Activated B cell treated with CpG ODN at 0.5 μM for 24 hours (primary cell): ENCODE measurements at regions of chr16 and their contacts with region 1.

Region 1: GRCh38 chr16:2911580-2912329 is at the start of gene FLYWCH1:
- DNase-seq: peak; percentile 96
- ATAC-seq: peak; percentile 97
- H3K4me3 Mint-ChIP-seq: peak within 1 kb of the TSS; percentile 93
- H3K27ac Mint-ChIP-seq: peak within 1 kb of the TSS; percentile 82
- H3K4me1 Mint-ChIP-seq: peaks cover 27% of the 10 kb centered on the region
- H3K27me3 Mint-ChIP-seq: no peaks in the 10 kb centered on the region
- CTCF ChIP-seq: no peak
- total RNA-seq, gene FLYWCH1: 53.5 and 59.9 TPM in 2 replicates

Region 2: DNA sequence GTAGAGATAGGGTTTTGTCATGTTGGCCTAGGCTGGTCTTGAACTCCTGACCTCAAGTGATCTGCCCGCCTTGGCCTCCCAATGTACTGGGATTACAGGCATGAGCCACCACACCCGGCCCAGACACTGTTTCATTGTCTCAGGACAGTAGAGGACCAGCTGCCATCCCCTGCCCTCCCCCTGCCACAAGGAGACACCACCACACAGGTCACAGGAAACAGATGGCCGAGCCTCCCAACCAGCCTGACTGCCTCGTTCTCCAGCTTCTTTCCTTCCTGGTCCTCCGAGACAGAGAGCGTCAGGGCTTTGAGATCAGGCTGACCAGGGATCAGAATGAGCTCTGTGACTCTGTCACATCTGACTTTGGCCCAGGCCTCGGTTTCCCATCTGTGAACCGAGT is 623.0 kb before region 1 on chr16:
- CTCF ChIA-PET with region 1: no interaction called
- POLR2A ChIA-PET with region 1: no interaction called
- intact Hi-C with region 1: no loop called
- DNase-seq: no peak
- ATAC-seq: no peak
- H3K4me3 Mint-ChIP-seq: no peak overlapping the region
- H3K27ac Mint-ChIP-seq: no peak overlapping the region
- H3K4me1 Mint-ChIP-seq: no peaks in the 10 kb centered on the region
- H3K27me3 Mint-ChIP-seq: no peaks in the 10 kb centered on the region
- CTCF ChIP-seq: no peak

Region 3: GRCh38 chr16:2673066-2673999 is 238.4 kb before region 1 on chr16:
- CTCF ChIA-PET with region 1: no interaction called
- POLR2A ChIA-PET with region 1: no interaction called
- intact Hi-C with region 1: loop called (anchors 5 kb)
- DNase-seq: peak; percentile 91
- ATAC-seq: peak; percentile 94
- H3K4me3 Mint-ChIP-seq: peak overlapping the region; percentile 85
- H3K27ac Mint-ChIP-seq: peak overlapping the region; percentile 71
- H3K4me1 Mint-ChIP-seq: peaks cover 29% of the 10 kb centered on the region
- H3K27me3 Mint-ChIP-seq: no peaks in the 10 kb centered on the region
- CTCF ChIP-seq: no peak

Region 4: GRCh38 chr16:2897113-2897512 is 14.6 kb before region 1 on chr16:
- CTCF ChIA-PET with region 1: interaction called, 4 read pairs
- POLR2A ChIA-PET with region 1: interaction called, 11 read pairs
- intact Hi-C with region 1: loop called (anchors 2 kb)
- DNase-seq: peak; percentile 82
- ATAC-seq: peak; percentile 100
- H3K4me3 Mint-ChIP-seq: peak overlapping the region; percentile 55
- H3K27ac Mint-ChIP-seq: peak overlapping the region; percentile 69
- H3K4me1 Mint-ChIP-seq: peaks cover 17% of the 10 kb centered on the region
- H3K27me3 Mint-ChIP-seq: no peaks in the 10 kb centered on the region
- CTCF ChIP-seq: no peak